Lower leg skin (tissue), 4 donors: ENCODE measurements at regions of chr16 and their contacts with region 1.

Region 1: GRCh38 chr16:832652-833336 is 32.3 kb upstream of the GNG13 start:
- DNase-seq: no peak
- H3K4me3 ChIP-seq: no peak overlapping the region
- CTCF ChIP-seq: no peak
- POLR2A ChIP-seq: no peak

Region 2: GRCh38 chr16:106623-107324 is 726.0 kb before region 1 on chr16:
- intact Hi-C with region 1: no loop called
- DNase-seq: peak in 1 of 2 donors; percentile 60
- H3K4me3 ChIP-seq: no peak overlapping the region
- CTCF ChIP-seq: peak in 1 of 3 donors; percentile 39
- POLR2A ChIP-seq: no peak

Region 3: DNA sequence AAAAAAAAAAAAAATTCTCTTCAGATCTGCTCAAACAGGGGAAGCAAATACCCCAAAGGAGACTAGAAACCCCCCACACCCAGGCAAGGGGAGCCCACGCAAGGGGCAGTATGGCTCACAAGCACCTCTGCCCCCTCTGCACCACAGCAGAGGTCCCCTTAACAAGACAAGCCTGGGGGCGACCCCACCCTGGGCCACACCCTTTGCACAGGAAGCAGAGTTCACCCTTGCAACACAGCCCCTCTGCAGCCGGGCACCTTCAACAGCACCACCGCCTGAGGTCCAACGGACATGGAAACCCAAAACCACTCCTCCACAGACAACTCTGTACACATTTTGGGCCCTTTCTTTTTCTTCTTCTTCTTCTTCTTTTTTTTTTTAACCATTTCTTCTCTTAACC is 493.1 kb before region 1 on chr16:
- intact Hi-C with region 1: no loop called
- DNase-seq: no peak
- H3K4me3 ChIP-seq: no peak overlapping the region
- CTCF ChIP-seq: no peak
- POLR2A ChIP-seq: no peak

Region 4: GRCh38 chr16:636206-637080 is 196.4 kb before region 1 on chr16 and contains the start of gene METTL26:
- intact Hi-C with region 1: no loop called
- DNase-seq: peak; percentile 93 to 99
- H3K4me3 ChIP-seq: peak within 1 kb of the TSS; percentile 80
- CTCF ChIP-seq: no peak
- POLR2A ChIP-seq: no peak
- total RNA-seq, gene METTL26: 108 to 161 (median 111) TPM

Region 5: DNA sequence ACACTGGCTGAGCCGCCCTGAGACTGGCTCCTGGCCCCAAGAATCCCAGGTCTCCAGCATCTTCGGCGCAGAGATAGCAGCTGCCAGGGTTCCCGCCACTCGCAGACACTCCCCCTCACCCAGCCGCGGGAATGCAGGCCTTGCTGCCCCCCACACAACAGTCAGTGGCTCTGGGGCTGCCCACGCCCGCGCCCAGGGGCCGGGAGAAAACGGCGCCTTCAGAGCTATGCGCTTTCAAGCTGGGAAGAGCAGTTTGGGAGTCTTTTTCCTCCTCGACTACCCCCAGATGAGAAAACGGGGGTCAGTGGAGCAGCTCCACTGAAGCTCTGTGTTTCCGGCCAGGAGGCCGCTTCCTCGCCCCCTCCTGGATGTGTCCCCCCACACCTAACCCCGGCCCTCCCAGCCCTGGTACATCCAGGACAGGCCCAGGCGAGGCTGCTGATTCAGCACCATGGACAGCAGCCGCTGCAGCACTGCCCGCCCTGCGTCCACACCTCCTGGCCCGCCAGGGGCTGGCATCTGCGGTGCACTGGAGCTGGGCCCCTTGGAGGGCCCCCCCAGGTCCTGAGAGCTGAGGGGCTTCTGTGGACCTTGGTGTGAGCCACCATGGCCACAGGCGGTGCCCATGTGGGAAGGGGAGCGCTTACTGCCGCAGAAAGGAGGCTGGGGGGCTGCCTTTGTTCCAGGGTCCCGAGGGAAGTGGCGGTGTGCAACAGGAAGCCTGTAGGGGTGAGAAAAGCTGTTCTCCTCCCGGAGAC is 355.8 kb after region 1 on chr16:
- intact Hi-C with region 1: loop called (anchors 10 kb)
- DNase-seq: peak in 1 of 2 donors; percentile 90
- H3K4me3 ChIP-seq: no peak overlapping the region
- CTCF ChIP-seq: no peak
- POLR2A ChIP-seq: no peak